Endothelial cell of umbilical vein (primary cell): ENCODE measurements at regions of chr12 and their contacts with region 1.

Region 1: DNA sequence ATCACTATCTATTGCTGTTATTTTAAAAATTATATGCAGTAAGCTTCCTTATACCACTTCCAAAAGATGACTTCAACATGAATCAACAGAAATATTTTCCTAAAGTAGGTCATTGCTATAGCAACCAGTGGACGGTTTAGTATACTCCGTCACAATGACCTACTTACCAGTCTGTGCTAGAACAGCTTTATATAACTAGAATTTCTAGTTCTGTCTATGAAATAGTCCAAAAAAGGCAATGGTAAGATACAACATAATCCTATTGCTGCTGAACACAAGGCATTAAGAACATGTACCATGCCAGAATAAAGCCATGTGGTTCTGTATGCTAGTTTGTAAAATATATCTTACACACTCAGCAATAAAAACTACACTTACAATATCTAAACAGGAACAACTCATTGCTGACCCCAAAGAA is 40.7 kb upstream of the MTERF2 start:
- DNase-seq: peak; percentile 95
- H3K4me3 ChIP-seq: no peak overlapping the region
- H3K27ac ChIP-seq: peak overlapping the region; percentile 81
- H3K4me1 ChIP-seq: peaks cover 17% of the 10 kb centered on the region
- H3K27me3 ChIP-seq: no peaks in the 10 kb centered on the region
- CTCF ChIP-seq: no peak
- POLR2A ChIP-seq: no peak

Region 2: DNA sequence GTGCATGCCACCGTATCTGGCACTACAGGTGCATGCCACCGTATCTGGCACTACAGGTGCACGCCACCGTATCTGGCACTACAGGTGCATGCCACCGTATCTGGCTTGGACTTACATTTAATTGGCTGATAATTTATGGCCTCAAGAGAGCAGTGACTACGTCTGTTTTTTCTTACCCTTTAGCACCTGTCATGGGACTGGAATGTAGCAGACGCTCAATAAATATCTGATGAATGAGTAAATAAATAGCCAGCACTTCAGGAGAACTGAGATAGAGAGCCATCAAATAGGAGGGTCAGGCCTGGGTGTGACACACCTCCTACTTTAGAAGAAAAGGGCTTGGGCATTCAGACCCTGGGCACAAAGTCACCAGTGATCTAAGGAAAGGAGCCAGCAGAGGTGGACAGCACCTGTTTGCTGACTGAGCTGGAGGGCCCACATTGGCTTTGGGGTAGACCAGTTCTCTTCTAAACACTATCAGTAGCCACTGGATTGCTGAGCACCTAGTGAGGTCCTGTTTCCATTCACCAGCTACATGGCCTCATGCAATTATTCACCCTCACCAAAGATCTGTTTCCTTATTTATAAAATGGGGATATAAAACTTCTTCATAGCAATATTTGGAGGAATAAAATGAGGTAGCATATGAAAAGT is 394.7 kb before region 1 on chr12:
- CTCF ChIA-PET with region 1: no interaction called
- POLR2A ChIA-PET with region 1: no interaction called
- dilution Hi-C with region 1: no loop called
- intact Hi-C with region 1: no loop called
- DNase-seq: no peak
- H3K4me3 ChIP-seq: no peak overlapping the region
- H3K27ac ChIP-seq: no peak overlapping the region
- H3K4me1 ChIP-seq: no peaks in the 10 kb centered on the region
- H3K27me3 ChIP-seq: no peaks in the 10 kb centered on the region
- CTCF ChIP-seq: no peak
- POLR2A ChIP-seq: no peak

Region 3: DNA sequence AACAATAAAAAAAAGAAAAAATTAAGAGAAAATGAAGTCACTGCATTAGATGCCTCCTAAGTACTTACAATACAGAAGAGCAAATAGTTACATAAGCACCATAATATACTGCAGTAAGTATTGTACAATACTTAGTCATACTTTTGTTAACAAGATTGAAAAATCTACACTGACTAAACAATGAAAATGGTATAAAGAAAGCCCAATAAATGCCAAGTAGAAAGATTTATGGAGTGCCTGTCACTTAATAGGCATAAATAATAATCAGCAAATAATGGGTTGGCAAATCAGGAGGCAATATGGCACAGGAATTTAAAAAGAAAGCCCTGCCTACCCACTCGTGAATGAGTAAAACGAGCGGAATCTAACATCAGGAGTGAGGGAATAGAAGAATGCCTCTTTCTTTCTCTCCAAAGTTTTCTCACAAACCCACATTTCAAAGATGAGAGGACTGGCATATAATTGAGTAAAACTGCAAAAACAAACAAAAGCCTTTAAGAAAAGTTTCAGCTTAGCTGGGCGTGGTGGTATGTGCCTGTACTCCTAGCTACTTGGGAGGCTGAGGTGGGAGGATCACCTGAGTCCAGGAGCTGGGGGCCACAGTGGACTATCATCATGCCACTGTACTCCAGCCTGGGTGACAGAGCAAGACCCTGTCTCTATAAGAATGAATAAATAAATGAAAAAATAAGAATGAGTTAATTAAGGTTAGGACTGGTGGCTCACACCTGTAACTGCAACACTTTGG is 29.6 kb after region 1 on chr12:
- CTCF ChIA-PET with region 1: interaction called, 4 read pairs
- POLR2A ChIA-PET with region 1: no interaction called
- dilution Hi-C with region 1: no loop called
- intact Hi-C with region 1: loop called (anchors 2 kb)
- DNase-seq: peak; percentile 80
- H3K4me3 ChIP-seq: peak overlapping the region in 1 of 3 experiments; percentile 47
- H3K27ac ChIP-seq: peak overlapping the region; percentile 51
- H3K4me1 ChIP-seq: peaks cover 16% of the 10 kb centered on the region
- H3K27me3 ChIP-seq: no peaks in the 10 kb centered on the region
- CTCF ChIP-seq: no peak
- POLR2A ChIP-seq: no peak

Region 4: DNA sequence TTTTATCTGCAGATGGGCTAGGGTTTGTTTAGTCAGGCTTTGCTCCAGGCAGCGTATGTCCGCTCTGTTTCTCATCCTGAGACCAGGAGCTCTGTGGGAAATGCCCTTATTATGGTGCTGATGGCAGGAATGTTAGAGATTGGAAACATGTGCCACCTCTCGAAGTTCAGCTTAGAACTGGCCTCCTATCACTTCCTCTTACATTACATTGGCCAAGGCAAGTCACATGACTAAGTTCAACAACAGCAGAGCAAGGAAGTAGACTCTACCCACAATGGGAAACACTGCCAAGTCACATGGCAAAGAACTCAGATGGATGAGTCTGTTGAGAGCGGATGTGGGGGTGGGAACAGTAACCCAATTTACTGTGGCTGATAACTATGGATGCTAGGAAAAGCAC is 939.5 kb after region 1 on chr12:
- CTCF ChIA-PET with region 1: no interaction called
- POLR2A ChIA-PET with region 1: no interaction called
- dilution Hi-C with region 1: no loop called
- intact Hi-C with region 1: no loop called
- DNase-seq: no peak
- H3K4me3 ChIP-seq: no peak overlapping the region
- H3K27ac ChIP-seq: no peak overlapping the region
- H3K4me1 ChIP-seq: no peaks in the 10 kb centered on the region
- H3K27me3 ChIP-seq: no peaks in the 10 kb centered on the region
- CTCF ChIP-seq: no peak
- POLR2A ChIP-seq: no peak